Panc1 (cell line): ENCODE measurements at regions of chr16 and their contacts with region 1.

Region 1: DNA sequence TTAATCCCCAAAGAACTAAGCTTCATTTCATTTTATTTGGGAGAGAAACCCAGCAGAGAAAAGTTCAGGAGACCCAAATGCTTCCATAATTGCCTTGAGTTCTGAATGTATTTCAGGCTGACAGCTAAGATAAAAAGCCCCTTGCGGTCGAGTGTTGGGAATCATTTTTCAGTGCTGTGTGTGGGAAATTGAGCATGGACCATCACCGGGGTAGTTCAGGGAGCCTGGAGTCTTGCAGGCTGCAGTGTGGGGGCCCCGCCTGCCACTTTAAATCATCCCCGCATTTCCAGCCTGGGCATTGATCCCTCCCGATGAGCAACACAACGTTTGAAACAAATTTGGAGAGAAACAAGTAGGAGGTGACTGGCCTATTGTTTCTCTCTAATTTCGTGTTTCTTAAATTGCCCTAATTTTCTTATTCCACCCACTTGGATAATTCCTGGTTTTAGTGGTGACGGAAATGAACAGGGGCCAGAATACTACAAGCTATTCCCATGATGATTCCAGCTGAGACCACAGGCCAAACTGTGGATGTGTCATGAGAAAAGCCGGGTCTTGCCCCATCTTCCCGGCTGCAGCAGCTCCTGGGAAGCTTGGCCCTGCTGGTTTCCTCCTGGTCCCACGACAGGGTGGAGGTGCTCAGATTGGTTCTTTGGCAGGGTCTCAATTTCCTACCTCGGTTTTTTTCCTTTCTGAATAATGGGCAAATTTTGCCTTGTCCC is 75.1 kb downstream of the FOXL1 start:
- DNase-seq: no peak
- ATAC-seq: no peak
- H3K4me3 ChIP-seq: no peak overlapping the region
- H3K27ac ChIP-seq: no peak overlapping the region
- H3K4me1 ChIP-seq: no peaks in the 10 kb centered on the region
- H3K27me3 ChIP-seq: no peaks in the 10 kb centered on the region
- CTCF ChIP-seq: no peak

Region 2: DNA sequence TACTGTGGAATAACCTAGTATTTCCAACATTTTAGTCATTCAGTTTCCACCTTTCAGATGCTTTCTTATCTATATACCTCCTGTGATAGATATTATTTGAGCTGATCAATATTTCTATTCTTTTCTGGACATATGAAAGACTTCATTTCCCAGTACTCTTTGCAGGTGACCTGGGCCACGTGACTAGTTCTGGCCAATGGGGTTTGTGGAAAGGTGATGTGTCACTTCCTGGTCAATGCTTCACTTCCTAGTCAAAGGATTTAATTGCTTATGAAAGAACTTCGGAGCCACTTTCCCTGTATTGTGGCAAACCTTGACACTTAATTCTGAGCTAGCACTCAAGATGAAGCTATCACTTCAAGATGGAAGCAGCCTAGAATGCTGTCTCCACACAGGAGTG is 392.1 kb before region 1 on chr16:
- CTCF ChIA-PET with region 1: no interaction called
- POLR2A ChIA-PET with region 1: no interaction called
- in situ Hi-C with region 1: no loop called
- intact Hi-C with region 1: no loop called
- DNase-seq: no peak
- ATAC-seq: no peak
- H3K4me3 ChIP-seq: no peak overlapping the region
- H3K27ac ChIP-seq: no peak overlapping the region
- H3K4me1 ChIP-seq: no peaks in the 10 kb centered on the region
- H3K27me3 ChIP-seq: 0 out of 2 replicates have a peak, but pooled peaks cover 3% of the 10 kb centered on the region
- CTCF ChIP-seq: no peak

Region 3: DNA sequence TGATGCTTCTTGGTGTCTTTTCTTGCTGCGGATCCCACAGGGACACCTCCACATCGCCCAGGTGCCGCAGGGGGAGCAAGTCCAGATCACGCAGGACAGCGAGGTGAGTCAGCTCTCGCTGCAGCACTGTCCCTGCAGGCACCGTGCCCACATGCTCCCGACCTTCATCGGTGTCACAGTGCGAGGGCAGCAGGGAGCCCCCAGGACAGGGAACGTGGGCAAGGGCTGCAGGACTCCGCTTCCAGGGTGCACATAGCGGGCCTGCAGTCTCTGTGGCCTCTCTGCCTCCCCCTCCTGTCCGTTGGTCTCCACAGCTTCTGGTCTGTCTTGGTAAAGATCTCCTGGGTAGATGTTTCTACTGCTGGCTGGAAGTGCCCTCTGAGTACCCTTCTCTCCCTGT is 1381.8 kb after region 1 on chr16:
- CTCF ChIA-PET with region 1: interaction called, 11 read pairs
- POLR2A ChIA-PET with region 1: no interaction called
- in situ Hi-C with region 1: no loop called
- intact Hi-C with region 1: no loop called
- DNase-seq: no peak
- ATAC-seq: no peak
- H3K4me3 ChIP-seq: no peak overlapping the region
- H3K27ac ChIP-seq: no peak overlapping the region
- H3K4me1 ChIP-seq: no peaks in the 10 kb centered on the region
- H3K27me3 ChIP-seq: no peaks in the 10 kb centered on the region
- CTCF ChIP-seq: no peak